HepG2 (cell line): ENCODE measurements at regions of chr15 and their contacts with region 1.

Region 1: DNA sequence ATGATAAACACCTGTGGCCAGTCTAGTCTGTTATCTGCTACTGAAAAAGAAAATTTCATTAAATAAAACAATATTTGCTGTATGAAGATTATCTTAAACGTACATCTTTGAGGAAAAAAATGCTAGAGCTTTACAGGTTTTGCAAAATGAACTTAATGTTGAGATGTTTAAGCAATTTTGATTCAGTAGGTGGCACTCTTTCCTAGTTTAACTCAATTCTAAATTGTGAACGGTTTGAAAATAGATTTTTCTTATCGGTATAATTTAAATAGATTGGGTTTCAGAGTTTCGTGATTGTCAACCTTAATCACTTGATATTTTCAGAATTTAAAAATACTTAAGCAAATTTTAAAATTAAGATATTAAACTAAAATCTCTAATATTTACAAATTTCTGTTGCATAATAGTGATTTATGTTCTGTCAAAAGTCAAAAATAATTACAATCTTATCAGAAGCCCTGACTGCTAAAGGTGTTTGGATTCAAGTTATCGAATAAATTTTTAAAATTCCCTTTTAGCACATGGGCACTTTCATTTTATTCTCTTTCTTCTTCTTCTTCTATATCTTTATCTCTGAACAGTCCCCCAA is 7.0 kb upstream of the RNF111 start:
- DNase-seq: peak; percentile 23
- ATAC-seq: no peak
- H3K4me3 ChIP-seq: no peak overlapping the region
- H3K27ac ChIP-seq: no peak overlapping the region
- H3K4me1 ChIP-seq: peaks cover 13% of the 10 kb centered on the region
- H3K27me3 ChIP-seq: no peaks in the 10 kb centered on the region
- CTCF ChIP-seq: peak; percentile 53
- EP300 ChIP-seq: no peak
- POLR2A ChIP-seq: no peak
- RAD21 ChIP-seq: no peak

Region 2: GRCh38 chr15:59138243-59138642 is 157.8 kb after region 1 on chr15:
- CTCF ChIA-PET with region 1: interaction called, 16 read pairs
- POLR2A ChIA-PET with region 1: no interaction called
- in situ Hi-C with region 1: loop called (anchors 5 kb)
- intact Hi-C with region 1: loop called (anchors 1 kb)
- DNase-seq: peak; percentile 54
- ATAC-seq: peak; percentile 98
- H3K4me3 ChIP-seq: no peak overlapping the region
- H3K27ac ChIP-seq: no peak overlapping the region
- H3K4me1 ChIP-seq: no peaks in the 10 kb centered on the region
- H3K27me3 ChIP-seq: no peaks in the 10 kb centered on the region
- CTCF ChIP-seq: peak; percentile 83
- EP300 ChIP-seq: no peak
- POLR2A ChIP-seq: no peak
- RAD21 ChIP-seq: peak; percentile 69

Region 3: GRCh38 chr15:59221511-59222505 is 241.4 kb after region 1 on chr15:
- CTCF ChIA-PET with region 1: no interaction called
- POLR2A ChIA-PET with region 1: no interaction called
- in situ Hi-C with region 1: no loop called
- intact Hi-C with region 1: no loop called
- DNase-seq: no peak
- ATAC-seq: no peak
- H3K4me3 ChIP-seq: no peak overlapping the region
- H3K27ac ChIP-seq: no peak overlapping the region
- H3K4me1 ChIP-seq: peaks cover 8% of the 10 kb centered on the region; the same call in 1 of the 2 replicates
- H3K27me3 ChIP-seq: no peaks in the 10 kb centered on the region
- CTCF ChIP-seq: no peak
- EP300 ChIP-seq: no peak
- POLR2A ChIP-seq: no peak
- RAD21 ChIP-seq: no peak

Region 4: DNA sequence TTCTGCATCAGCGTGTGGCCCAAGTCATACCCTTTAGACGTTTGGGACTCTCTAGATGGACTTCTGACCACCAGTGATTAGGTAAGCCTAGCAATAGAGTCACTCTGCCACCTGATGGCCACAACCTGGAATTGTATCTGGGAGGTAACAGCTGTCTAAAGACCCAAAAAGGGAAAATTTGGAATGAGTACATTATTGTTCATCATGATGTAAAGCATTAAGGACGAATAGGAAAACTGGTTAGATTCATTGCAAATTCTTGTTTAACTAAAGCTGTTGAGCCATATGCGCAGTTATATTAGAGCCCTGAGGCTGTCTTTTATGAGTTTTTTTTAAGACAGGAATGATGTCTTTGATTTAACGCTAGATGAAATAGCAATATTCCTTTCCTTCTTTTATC is 521.2 kb after region 1 on chr15:
- CTCF ChIA-PET with region 1: no interaction called
- POLR2A ChIA-PET with region 1: no interaction called
- in situ Hi-C with region 1: loop called (anchors 10 kb)
- intact Hi-C with region 1: loop called (anchors 2 kb)
- DNase-seq: peak; percentile 72
- ATAC-seq: peak; percentile 88
- H3K4me3 ChIP-seq: no peak overlapping the region
- H3K27ac ChIP-seq: no peak overlapping the region
- H3K4me1 ChIP-seq: no peaks in the 10 kb centered on the region
- H3K27me3 ChIP-seq: no peaks in the 10 kb centered on the region
- CTCF ChIP-seq: peak; percentile 87
- EP300 ChIP-seq: no peak
- POLR2A ChIP-seq: no peak
- RAD21 ChIP-seq: peak; percentile 71